ENCODE measurements at regions of chr1 and their contacts with region 1.

Region 1: DNA sequence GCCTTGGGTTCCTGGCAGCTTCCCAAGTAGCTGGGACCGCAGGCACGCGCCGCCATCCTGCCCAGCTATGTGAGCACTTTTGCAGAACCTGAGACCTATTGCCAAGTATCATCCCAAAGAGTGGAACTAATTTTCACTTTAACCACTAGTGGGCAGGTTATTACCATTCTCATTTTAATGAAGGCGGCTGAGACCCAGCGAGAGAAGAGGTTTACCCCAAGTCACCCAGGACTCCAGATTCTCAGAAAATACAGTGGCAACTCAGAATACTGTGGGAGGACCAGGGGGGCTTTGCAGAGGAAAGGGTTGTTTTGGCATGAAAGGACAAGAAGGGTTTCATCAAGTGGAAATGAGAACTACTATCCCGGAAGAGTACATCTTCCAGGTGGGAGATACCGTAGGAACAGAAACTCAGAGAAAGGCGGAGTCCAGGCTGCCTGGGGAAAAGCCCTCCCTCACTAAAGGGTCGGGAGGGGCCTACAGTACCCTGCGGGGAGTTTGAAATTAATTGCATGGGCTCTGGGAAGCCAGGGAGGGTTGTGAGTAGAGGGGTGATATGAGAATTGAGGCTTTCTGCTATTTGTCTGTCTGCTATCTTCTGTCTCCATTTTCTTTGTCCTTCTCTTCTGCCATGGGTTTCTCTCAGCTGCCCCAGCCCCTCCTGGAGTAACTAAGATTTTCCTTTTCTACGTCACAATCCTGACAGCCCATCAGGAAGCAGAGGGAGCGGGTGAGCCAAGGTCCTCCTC is 7.2 kb upstream of the SEMA4A start:
- DNase-seq: peak; percentile 49
- ATAC-seq: peak; percentile 82
- H3K4me3 Mint-ChIP-seq: peak overlapping the region; percentile 83
- H3K27ac Mint-ChIP-seq: peak overlapping the region; percentile 89
- H3K4me1 Mint-ChIP-seq: peaks cover 33% of the 10 kb centered on the region
- H3K27me3 Mint-ChIP-seq: peaks cover 2% of the 10 kb centered on the region

Region 2: GRCh38 chr1:156172696-156173470 is 26.7 kb after region 1 on chr1:
- POLR2A ChIA-PET with region 1: no interaction called
- DNase-seq: no peak
- ATAC-seq: no peak
- H3K4me3 Mint-ChIP-seq: no peak overlapping the region
- H3K27ac Mint-ChIP-seq: no peak overlapping the region
- H3K4me1 Mint-ChIP-seq: peaks cover 10% of the 10 kb centered on the region
- H3K27me3 Mint-ChIP-seq: no peaks in the 10 kb centered on the region

Region 3: DNA sequence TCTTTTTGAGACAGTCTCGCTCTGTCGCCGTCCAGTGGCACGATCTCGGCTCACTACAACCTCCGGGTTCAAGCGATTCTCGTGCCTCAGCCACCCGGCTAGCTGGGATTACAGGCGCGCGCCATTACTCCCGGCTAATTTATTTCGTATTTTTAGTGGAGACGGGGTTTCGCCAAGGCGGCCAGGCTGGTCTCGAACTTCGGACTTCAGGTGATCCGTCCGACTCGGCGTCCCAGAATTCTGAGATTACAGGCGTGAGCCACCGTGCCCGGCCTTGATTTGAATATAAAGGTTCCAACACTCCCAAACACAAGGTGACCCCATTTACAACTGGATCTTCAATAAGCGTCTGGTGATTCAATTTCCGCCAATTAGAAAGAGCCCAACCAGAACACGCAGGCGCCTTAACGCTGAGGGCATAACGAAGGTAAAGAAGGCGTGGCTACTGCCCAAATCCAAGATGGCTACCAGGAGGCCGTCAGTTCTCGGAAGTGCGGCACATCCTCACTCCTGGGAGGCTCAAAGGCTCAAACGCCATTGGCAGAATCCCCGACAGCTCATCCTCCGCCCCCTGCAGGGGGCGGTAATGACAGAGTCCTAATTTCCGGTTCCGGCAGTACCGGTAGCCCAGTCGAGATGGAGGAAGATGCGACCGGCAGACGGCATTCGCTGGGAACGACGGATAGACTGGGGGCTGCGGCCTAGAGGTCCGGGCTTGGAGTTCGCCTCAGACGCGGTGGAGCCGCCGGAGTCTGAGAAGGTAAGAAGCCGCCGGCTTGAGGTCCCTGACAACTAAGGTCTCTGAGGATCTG is 47.5 kb after region 1 on chr1 and contains the start of gene SLC25A44:
- POLR2A ChIA-PET with region 1: interaction called, 11 read pairs
- DNase-seq: peak; percentile 94
- ATAC-seq: peak; percentile 97
- H3K4me3 Mint-ChIP-seq: peak within 1 kb of the TSS; percentile 91
- H3K27ac Mint-ChIP-seq: peak within 1 kb of the TSS; percentile 86
- H3K4me1 Mint-ChIP-seq: peaks cover 42% of the 10 kb centered on the region
- H3K27me3 Mint-ChIP-seq: no peaks in the 10 kb centered on the region
- total RNA-seq, gene SLC25A44: 30.9 to 35.3 TPM

Region 4: GRCh38 chr1:156226116-156226538 is 79.9 kb after region 1 on chr1:
- POLR2A ChIA-PET with region 1: interaction called, 79 read pairs
- DNase-seq: no peak
- ATAC-seq: no peak
- H3K4me3 Mint-ChIP-seq: peak overlapping the region; percentile 20
- H3K27ac Mint-ChIP-seq: peak overlapping the region; percentile 69
- H3K4me1 Mint-ChIP-seq: peaks cover 42% of the 10 kb centered on the region
- H3K27me3 Mint-ChIP-seq: no peaks in the 10 kb centered on the region

Measured in activated naive CD8-positive, alpha-beta T cell treated with anti-CD3 and anti-CD28 coated beads, Interleukin-2, amount 10 ng/mL, durations not matched to agents 7 days and 5 days (primary cell).